Activated naive CD4-positive, alpha-beta T cell treated with anti-CD3 and anti-CD28 coated beads for 36 hours (primary cell): ENCODE measurements at regions of chrX and their contacts with region 1.

Region 1: GRCh38 chrX:71365876-71366673 is at the start of gene TAF1:
- DNase-seq: peak; percentile 96
- H3K4me3 Mint-ChIP-seq: peak within 1 kb of the TSS; percentile 98
- H3K27ac Mint-ChIP-seq: peak within 1 kb of the TSS; percentile 99
- H3K4me1 Mint-ChIP-seq: peaks cover 25% of the 10 kb centered on the region
- H3K27me3 Mint-ChIP-seq: no peaks in the 10 kb centered on the region
- total RNA-seq, gene TAF1: 24.0 to 27.2 TPM

Region 2: DNA sequence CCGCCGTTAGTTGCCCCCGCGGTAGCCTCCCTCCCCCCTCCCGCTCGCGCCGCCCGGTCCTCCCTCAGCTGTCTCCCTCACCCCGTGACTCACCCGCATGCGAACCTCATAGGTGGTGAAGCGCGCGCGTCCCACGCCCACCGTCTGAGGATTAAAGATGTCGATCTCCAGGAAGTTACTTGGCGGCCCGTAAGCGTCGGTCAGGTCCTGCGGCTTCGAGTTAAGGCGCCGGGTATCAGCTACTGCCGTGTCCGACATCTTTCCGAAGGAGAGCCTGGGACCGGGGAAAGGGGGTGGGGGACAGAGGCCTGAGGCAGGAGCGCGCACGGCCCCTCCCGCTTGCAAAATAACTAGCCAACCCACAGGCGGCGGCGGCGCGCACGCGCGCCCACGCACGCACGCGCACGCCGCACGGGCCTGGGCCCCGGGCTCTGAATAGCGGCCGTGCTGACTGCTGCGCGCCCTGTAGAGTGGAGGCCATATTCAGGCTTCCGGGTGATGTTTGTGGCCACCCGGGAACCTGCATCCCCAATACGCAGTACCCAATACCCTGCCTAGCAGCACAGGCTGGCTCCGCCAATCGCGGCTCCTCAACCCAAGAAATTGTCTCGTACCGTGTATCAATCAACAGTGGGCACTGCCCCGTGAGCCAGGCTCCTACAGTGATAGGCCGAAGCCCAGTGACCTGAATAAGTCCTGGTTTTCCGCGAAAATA is 297.9 kb before region 1 on chrX and contains the start of gene SNX12:
- CTCF ChIA-PET with region 1: no interaction called
- intact Hi-C with region 1: loop called (anchors 1 kb)
- DNase-seq: peak; percentile 93
- H3K4me3 Mint-ChIP-seq: peak within 1 kb of the TSS; percentile 96
- H3K27ac Mint-ChIP-seq: peak within 1 kb of the TSS; percentile 94
- H3K4me1 Mint-ChIP-seq: peaks cover 19% of the 10 kb centered on the region
- H3K27me3 Mint-ChIP-seq: no peaks in the 10 kb centered on the region
- total RNA-seq, gene SNX12: 32.9 to 35.2 TPM

Region 3: GRCh38 chrX:71095543-71095911 is 270.5 kb before region 1 on chrX and contains the start of gene FOXO4:
- CTCF ChIA-PET with region 1: no interaction called
- intact Hi-C with region 1: loop called (anchors 1 kb)
- DNase-seq: peak; percentile 91
- H3K4me3 Mint-ChIP-seq: peak within 1 kb of the TSS; percentile 82
- H3K27ac Mint-ChIP-seq: peak within 1 kb of the TSS; percentile 72
- H3K4me1 Mint-ChIP-seq: peaks cover 30% of the 10 kb centered on the region
- H3K27me3 Mint-ChIP-seq: no peaks in the 10 kb centered on the region
- total RNA-seq, gene FOXO4: 7.9 to 8.9 TPM

Region 4: GRCh38 chrX:71111141-71111843 is 254.8 kb before region 1 on chrX and contains the start of gene IL2RG:
- CTCF ChIA-PET with region 1: no interaction called
- intact Hi-C with region 1: loop called (anchors 5 kb)
- DNase-seq: peak; percentile 87
- H3K4me3 Mint-ChIP-seq: peak within 1 kb of the TSS; percentile 93
- H3K27ac Mint-ChIP-seq: peak within 1 kb of the TSS; percentile 95
- H3K4me1 Mint-ChIP-seq: peaks cover 37% of the 10 kb centered on the region
- H3K27me3 Mint-ChIP-seq: no peaks in the 10 kb centered on the region
- total RNA-seq, gene IL2RG: 144 to 148 TPM

Region 5: GRCh38 chrX:71254092-71254941 is 111.8 kb before region 1 on chrX and contains the start of gene ZMYM3:
- CTCF ChIA-PET with region 1: no interaction called
- intact Hi-C with region 1: loop called (anchors 1 kb)
- DNase-seq: peak; percentile 70
- H3K4me3 Mint-ChIP-seq: peak within 1 kb of the TSS; percentile 87
- H3K27ac Mint-ChIP-seq: peak within 1 kb of the TSS; percentile 76
- H3K4me1 Mint-ChIP-seq: peaks cover 29% of the 10 kb centered on the region
- H3K27me3 Mint-ChIP-seq: no peaks in the 10 kb centered on the region
- total RNA-seq, gene ZMYM3: 7.7 to 8.2 TPM

Region 6: GRCh38 chrX:71292669-71293365 is 73.3 kb before region 1 on chrX:
- CTCF ChIA-PET with region 1: no interaction called
- intact Hi-C with region 1: no loop called
- DNase-seq: no peak
- H3K4me3 Mint-ChIP-seq: no peak overlapping the region
- H3K27ac Mint-ChIP-seq: no peak overlapping the region
- H3K4me1 Mint-ChIP-seq: peaks cover 7% of the 10 kb centered on the region
- H3K27me3 Mint-ChIP-seq: no peaks in the 10 kb centered on the region

Region 7: GRCh38 chrX:71532753-71533425 is 166.8 kb after region 1 on chrX and contains the start of gene OGT:
- CTCF ChIA-PET with region 1: no interaction called
- intact Hi-C with region 1: loop called (anchors 1 kb)
- DNase-seq: peak; percentile 96
- H3K4me3 Mint-ChIP-seq: peak within 1 kb of the TSS; percentile 96
- H3K27ac Mint-ChIP-seq: peak within 1 kb of the TSS; percentile 98
- H3K4me1 Mint-ChIP-seq: peaks cover 30% of the 10 kb centered on the region
- H3K27me3 Mint-ChIP-seq: no peaks in the 10 kb centered on the region
- total RNA-seq, gene OGT: 307 to 323 TPM

Region 8: DNA sequence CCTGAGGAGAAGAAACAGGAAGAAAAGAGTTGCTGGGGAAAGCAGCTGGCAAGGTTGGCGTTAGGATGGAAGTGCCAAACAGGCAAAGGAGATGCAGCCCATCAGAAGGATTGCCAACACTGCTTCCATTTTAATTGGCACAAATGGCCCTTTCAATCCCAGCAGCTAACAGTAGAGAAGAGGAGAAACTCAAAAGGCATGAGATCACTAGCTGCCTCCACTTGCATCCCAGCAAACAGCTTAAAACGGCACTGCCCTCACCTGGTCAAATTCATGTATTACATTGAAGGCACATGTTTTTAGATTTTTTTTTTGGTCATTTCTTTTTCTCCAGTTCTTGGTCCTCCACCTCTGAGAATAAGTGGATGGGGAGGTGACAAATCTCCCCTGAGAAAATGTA is 286.3 kb after region 1 on chrX:
- CTCF ChIA-PET with region 1: no interaction called
- intact Hi-C with region 1: loop called (anchors 5 kb)
- DNase-seq: peak; percentile 78
- H3K4me3 Mint-ChIP-seq: no peak overlapping the region
- H3K27ac Mint-ChIP-seq: no peak overlapping the region
- H3K4me1 Mint-ChIP-seq: peaks cover 10% of the 10 kb centered on the region
- H3K27me3 Mint-ChIP-seq: no peaks in the 10 kb centered on the region